BJ (cell line): ENCODE measurements at regions of chr22 and their contacts with region 1.

Region 1: DNA sequence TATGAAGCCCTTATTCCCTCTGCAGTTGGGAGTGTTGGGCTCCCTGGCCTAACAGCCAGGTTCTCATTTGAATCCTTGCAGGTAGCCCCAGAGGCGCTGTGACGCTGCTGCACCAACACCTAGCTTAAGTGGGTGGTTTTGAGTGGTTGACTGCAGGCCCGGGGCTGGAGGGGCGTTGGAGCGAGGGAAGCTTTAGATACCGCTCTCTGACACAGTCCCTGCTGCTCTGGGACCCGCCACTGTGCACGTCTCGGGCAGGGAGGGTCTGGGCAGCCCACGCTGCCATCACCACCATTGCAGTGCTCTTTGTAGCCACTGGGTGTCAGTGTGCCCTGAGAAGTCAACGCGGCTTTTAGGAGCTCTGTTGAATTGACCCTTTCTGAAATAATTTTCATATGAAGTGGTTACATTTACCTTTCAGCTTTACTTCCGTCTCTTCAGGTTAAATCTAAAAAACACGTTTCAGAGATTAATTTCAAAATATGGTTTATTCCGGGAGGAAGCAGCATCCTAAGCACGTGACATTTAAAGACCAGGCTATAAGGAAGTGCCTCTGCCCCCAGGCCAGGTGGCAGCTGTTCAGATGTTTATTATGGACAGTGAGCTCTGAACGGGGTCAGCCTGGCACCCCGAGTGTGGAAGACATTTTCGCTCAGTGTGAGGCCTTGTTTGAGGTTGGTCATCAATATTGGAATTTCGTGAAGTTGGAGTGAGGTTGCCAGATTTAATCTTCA is 30.9 kb upstream of the PARVB start:
- DNase-seq: no peak
- H3K4me3 ChIP-seq: no peak overlapping the region
- H3K27me3 ChIP-seq: no peaks in the 10 kb centered on the region
- CTCF ChIP-seq: peak; percentile 96

Region 2: GRCh38 chr22:43980996-43981395 is 12.2 kb before region 1 on chr22:
- CTCF ChIA-PET with region 1: interaction called, 28 read pairs
- POLR2A ChIA-PET with region 1: no interaction called
- DNase-seq: no peak
- H3K4me3 ChIP-seq: no peak overlapping the region
- H3K27me3 ChIP-seq: no peaks in the 10 kb centered on the region
- CTCF ChIP-seq: no peak

Region 3: GRCh38 chr22:44080936-44081861 is 88.0 kb after region 1 on chr22:
- CTCF ChIA-PET with region 1: interaction called, 105 read pairs
- POLR2A ChIA-PET with region 1: no interaction called
- DNase-seq: no peak
- H3K4me3 ChIP-seq: no peak overlapping the region
- H3K27me3 ChIP-seq: no peaks in the 10 kb centered on the region
- CTCF ChIP-seq: peak; percentile 92

Region 4: DNA sequence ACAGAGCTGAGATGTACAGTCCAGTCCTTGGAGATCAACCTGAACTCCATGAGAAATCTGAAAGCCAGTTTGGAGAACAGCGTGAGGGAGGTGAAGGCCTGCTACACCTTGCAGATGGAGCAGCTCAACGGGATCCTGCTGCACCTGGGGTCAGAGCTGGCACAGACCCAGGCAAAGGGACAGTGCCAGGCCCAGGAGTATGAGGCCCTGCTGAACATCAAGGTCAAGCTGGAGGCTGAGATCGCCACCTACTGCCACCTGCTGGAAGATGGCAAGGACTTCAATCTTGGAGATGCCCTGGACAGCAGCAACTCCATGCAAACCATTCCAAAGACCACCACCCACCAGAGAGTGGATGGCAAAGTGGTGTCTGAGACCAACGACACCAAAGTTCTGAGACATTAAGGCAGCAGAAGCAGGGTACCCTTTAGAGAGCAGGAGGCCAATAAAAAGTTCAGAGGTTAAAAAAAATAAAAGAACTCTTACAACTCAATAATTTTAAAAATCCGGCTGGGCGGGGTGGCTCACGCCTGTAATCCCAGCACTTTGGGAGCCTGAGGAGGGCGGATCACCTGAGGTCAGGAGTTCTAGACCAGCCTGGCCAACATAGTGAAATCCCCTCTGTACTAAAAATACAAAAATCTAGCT is 574.8 kb after region 1 on chr22:
- CTCF ChIA-PET with region 1: interaction called, 16 read pairs
- POLR2A ChIA-PET with region 1: no interaction called
- DNase-seq: no peak
- H3K4me3 ChIP-seq: no peak overlapping the region
- H3K27me3 ChIP-seq: no peaks in the 10 kb centered on the region; the same call in 1 of the 2 replicates
- CTCF ChIP-seq: peak; percentile 69